Activated CD8-positive, alpha-beta T cell treated with anti-CD3 and anti-CD28 coated beads for 36 hours (primary cell): ENCODE measurements at regions of chr17 and their contacts with region 1.

Region 1: GRCh38 chr17:40075201-40075941 is 12.6 kb downstream of the THRA start:
- DNase-seq: peak; percentile 73
- ATAC-seq: peak; percentile 93
- H3K4me3 Mint-ChIP-seq: no peak overlapping the region
- H3K27ac Mint-ChIP-seq: peak overlapping the region; percentile 47
- H3K4me1 Mint-ChIP-seq: peaks cover 32% of the 10 kb centered on the region
- H3K27me3 Mint-ChIP-seq: no peaks in the 10 kb centered on the region
- CTCF ChIP-seq: peak; percentile 91

Region 2: DNA sequence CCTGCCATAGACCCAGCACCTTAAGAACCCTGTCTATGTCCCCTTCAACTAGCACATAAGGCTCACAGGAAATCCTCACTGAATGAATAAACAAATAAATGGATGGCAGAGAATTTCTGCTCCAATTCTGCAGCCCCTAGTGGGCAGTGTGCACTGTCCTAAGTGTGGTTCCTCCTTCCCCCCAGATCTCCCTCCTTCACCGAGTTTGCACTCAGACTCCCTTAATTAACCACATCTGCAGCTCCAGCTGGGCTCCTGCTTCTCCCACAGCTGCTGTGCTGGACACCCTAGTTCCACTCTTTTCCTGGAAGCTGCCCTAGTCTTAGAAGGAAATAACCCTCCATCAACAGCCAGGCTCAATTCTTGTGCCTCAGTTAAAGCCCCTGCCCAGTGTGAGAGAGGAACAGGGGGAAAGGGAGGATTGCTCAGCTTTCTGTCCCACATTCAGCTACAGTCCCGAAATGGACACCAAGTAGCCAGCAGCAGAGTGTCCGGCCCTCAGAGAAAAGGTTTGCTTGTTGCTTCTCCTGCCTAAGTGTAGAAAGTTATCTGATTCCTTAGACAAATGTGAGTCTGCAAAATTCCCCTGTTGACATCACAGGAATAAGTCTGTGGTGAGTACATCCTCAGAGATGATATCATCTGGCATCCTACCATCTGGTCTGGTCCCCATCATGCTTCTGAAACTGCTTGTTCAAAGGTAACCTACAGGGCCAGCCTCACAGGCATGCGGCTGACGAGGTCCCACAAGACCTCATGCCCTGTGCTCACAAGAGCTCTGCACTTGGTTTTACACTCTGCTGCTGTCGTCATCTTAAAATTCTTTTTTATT is 135.6 kb before region 1 on chr17:
- CTCF ChIA-PET with region 1: no interaction called
- POLR2A ChIA-PET with region 1: no interaction called
- intact Hi-C with region 1: no loop called
- DNase-seq: peak; percentile 82
- ATAC-seq: peak; percentile 97
- H3K4me3 Mint-ChIP-seq: no peak overlapping the region
- H3K27ac Mint-ChIP-seq: peak overlapping the region; percentile 68
- H3K4me1 Mint-ChIP-seq: peaks cover 16% of the 10 kb centered on the region
- H3K27me3 Mint-ChIP-seq: no peaks in the 10 kb centered on the region
- CTCF ChIP-seq: peak; percentile 10

Region 3: DNA sequence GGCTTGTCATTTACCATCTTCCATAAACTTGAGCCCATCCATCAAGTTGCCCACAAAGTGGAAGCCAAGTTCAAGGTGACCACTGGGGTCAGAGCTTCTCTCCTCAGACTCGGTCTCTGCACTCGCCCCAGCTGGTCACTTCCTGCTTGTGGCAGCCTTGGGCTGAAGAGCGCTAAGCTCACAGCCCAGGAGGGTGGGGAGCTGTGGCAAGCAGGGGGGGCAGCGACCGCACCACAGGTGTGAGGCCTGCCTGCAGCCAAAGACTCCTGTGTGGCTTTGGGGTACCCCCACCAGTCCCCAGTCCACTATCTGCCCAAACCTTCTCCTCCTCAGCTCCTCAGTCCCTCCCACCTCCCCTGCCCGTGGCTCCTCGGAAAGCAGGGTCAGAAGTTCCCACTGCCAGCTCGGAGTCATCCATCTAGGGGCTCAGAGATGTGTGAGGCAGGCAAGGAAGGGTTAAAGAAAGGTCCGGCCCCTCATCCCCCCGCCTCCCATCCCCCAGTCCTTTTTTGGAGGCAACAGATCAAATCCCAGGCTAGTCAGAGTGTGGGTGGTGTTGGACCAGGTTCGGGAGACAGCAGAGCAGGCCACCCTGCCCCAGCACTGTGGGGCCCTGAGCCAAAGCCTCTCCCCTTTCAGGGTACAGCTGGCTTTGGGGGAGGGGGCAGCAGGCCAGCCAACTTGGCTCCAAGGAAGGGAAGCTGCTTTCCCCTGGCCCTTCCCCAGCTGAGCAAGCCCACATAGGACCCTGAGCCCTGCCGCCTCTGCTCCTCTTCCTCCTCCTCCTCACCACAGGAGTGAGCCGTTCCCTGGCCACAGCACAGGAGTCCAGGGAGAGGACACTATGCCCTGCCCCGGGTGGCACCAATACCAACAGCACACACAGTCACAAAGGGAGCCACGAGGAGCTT is 56.9 kb before region 1 on chr17:
- CTCF ChIA-PET with region 1: interaction called, 33 read pairs
- POLR2A ChIA-PET with region 1: no interaction called
- intact Hi-C with region 1: no loop called
- DNase-seq: no peak
- ATAC-seq: no peak
- H3K4me3 Mint-ChIP-seq: no peak overlapping the region
- H3K27ac Mint-ChIP-seq: no peak overlapping the region
- H3K4me1 Mint-ChIP-seq: no peaks in the 10 kb centered on the region
- H3K27me3 Mint-ChIP-seq: no peaks in the 10 kb centered on the region
- CTCF ChIP-seq: no peak

Region 4: DNA sequence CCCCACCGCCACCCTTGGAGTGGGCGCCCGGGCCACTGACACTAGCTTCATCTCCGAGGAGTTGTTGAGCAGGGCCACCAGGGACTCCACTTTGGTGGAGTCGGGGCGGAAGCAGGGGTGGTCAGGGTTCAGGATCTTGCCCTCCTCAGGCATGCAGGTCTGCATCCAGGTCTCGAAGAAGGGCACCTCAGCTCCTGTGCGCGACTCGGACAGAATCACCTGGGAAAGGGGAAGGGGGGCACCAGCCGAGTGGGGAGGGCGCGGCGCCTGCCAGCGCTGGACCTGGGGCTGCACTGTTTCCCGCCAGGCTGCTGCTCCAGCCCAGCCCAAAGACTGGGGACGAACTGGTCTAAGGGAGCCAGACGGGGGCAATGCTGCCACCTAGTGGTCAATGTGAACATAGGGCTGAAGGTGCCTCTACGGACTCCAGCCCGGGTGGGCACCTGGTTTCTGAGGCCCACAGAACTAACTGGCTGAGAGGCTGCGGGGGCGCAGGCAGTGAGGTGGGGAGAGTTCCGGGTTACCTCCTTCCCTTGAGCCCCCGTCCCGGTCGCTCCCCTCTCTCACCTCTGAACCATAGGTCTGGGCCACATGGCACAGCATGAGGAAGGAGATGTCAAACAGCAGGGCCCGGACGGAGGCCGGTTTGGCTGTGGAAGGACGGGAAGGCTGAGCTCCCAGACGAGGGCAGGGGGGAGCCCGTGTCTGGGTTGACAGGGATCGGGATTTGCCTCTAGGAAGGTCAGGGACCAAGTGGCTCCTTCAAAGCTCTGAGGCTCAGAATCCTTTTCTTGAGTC is 48.4 kb before region 1 on chr17:
- CTCF ChIA-PET with region 1: interaction called, 29 read pairs
- POLR2A ChIA-PET with region 1: no interaction called
- intact Hi-C with region 1: no loop called
- DNase-seq: peak; percentile 83
- ATAC-seq: peak; percentile 93
- H3K4me3 Mint-ChIP-seq: no peak overlapping the region
- H3K27ac Mint-ChIP-seq: no peak overlapping the region
- H3K4me1 Mint-ChIP-seq: peaks cover 16% of the 10 kb centered on the region
- H3K27me3 Mint-ChIP-seq: no peaks in the 10 kb centered on the region
- CTCF ChIP-seq: peak; percentile 92

Region 5: DNA sequence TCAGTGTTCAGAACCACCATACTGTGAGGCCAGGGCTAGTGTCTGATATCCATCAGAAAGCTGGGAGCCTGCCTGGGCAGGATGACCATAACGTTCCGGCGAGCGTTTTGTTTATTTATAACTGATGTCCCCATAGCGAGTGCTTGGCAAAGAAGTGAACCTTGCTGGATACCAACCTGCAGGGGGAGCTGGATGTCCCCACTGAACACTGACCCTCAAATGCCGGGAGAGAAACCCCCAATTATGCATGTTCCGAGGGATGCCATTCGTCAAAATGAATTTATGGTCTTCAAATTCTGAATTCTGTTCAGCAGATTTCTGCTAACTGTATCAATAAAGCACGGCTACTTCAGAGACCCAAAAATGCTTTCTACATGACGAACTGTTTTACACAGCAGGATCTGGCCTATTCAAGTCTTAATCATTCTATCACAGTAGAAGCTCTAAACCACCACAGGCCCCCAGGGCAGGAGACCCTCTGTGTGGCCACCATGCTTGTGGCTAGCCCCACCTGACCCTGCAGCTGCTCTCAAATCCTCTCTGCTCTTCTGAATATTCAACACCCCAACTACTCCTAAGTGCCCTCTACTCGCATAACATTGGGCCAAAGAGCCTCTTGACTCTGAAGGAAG is 36.4 kb before region 1 on chr17:
- CTCF ChIA-PET with region 1: interaction called, 17 read pairs
- POLR2A ChIA-PET with region 1: no interaction called
- intact Hi-C with region 1: no loop called
- DNase-seq: no peak
- ATAC-seq: no peak
- H3K4me3 Mint-ChIP-seq: no peak overlapping the region
- H3K27ac Mint-ChIP-seq: no peak overlapping the region
- H3K4me1 Mint-ChIP-seq: no peaks in the 10 kb centered on the region
- H3K27me3 Mint-ChIP-seq: no peaks in the 10 kb centered on the region
- CTCF ChIP-seq: peak; percentile 28

Region 6: GRCh38 chr17:40062329-40063186 is 12.8 kb before region 1 on chr17 and contains the start of gene THRA:
- CTCF ChIA-PET with region 1: interaction called, 168 read pairs
- POLR2A ChIA-PET with region 1: interaction called, 6 read pairs
- intact Hi-C with region 1: no loop called
- DNase-seq: peak; percentile 70
- ATAC-seq: peak; percentile 85
- H3K4me3 Mint-ChIP-seq: peak within 1 kb of the TSS; percentile 89
- H3K27ac Mint-ChIP-seq: peak within 1 kb of the TSS; percentile 84
- H3K4me1 Mint-ChIP-seq: peaks cover 43% of the 10 kb centered on the region
- H3K27me3 Mint-ChIP-seq: no peaks in the 10 kb centered on the region
- CTCF ChIP-seq: no peak
- total RNA-seq, gene THRA: 11.1 to 13.8 TPM

Region 7: DNA sequence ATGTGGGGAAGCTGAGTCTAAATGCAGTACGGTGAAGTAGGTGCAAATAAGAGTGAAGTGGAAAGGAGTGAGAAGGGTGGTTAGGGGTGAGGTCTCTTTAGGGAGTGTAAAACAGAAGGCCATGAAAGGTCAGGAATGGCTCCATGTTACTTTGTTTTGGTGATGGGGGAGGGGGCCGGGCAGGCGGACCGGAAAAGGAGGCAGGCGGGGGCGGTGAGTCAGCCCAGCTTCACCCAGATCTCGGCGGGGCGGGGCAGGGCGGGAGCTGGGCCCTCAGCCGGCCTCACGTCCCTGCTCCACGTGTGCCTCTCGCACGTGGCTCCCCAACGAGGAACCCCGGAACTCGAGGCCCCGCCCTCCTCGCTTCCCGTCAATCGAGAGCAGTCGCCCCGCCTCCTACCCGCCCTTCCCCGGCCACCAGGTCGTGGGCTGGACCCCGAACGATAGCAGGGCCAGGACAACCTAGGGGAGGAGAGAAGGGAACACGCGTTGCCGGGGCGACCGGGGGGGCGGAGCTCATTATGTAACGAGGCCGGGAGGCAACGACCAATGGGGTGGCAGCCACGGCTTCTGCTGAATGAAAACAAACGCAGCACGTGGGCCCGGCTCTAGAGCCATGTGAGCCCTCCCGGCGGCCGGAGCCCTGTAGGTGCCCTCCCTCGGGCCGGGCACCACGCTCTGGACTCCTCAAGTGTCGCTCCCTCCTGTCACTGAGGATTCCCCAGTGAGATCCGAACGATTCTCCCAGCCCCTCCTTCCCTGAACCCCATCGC is 23.7 kb after region 1 on chr17:
- CTCF ChIA-PET with region 1: interaction called, 72 read pairs
- POLR2A ChIA-PET with region 1: interaction called, 5 read pairs
- intact Hi-C with region 1: no loop called
- DNase-seq: peak; percentile 100
- ATAC-seq: peak; percentile 72
- H3K4me3 Mint-ChIP-seq: peak overlapping the region; percentile 85
- H3K27ac Mint-ChIP-seq: peak overlapping the region; percentile 90
- H3K4me1 Mint-ChIP-seq: peaks cover 72% of the 10 kb centered on the region
- H3K27me3 Mint-ChIP-seq: no peaks in the 10 kb centered on the region
- CTCF ChIP-seq: no peak

Region 8: DNA sequence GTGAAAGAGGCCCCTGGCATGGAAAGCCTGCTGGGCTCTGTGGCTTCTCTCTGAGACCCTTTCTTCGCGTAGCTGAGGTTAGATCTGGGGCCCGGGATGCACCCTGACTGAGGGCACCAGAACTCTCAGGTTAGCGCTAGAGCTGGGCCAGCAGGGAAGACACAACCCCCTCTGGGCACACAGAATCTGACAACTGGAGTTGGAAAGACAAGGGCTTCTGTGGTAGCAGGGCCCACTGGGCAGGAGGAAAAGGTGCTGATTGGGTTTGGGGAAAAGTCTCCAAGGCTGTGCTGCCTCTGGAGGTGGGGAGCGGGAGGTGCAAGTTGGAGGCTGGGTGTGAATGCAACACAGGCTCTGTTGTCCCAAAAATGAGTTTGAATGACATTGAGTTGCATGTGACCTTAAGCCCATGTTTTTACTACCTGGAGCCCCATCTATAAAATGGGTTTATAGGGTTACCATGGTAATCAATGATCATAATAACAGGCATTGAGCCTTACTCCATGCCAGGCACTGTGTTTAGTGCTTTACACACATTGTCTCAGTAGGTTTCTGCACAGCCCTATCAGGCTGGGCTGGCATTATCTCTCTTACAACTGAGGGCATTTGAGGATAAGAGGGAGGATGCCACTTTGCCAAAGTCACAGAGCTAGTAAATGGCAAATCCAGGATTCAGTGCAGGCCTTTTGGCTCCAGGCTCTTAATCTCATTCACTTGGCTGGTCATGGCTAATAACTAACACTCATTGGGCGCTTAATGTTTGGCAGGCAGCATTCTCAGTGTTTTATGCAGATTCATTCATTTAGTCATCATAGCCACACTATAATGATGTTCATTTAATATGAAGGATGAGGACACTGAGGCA is 358.4 kb after region 1 on chr17:
- CTCF ChIA-PET with region 1: no interaction called
- POLR2A ChIA-PET with region 1: no interaction called
- intact Hi-C with region 1: no loop called
- DNase-seq: peak; percentile 43
- ATAC-seq: peak; percentile 82
- H3K4me3 Mint-ChIP-seq: no peak overlapping the region
- H3K27ac Mint-ChIP-seq: no peak overlapping the region
- H3K4me1 Mint-ChIP-seq: peaks cover 15% of the 10 kb centered on the region
- H3K27me3 Mint-ChIP-seq: no peaks in the 10 kb centered on the region
- CTCF ChIP-seq: peak; percentile 52